ENCODE measurements at regions of chr17 and their contacts with region 1.

Region 1: DNA sequence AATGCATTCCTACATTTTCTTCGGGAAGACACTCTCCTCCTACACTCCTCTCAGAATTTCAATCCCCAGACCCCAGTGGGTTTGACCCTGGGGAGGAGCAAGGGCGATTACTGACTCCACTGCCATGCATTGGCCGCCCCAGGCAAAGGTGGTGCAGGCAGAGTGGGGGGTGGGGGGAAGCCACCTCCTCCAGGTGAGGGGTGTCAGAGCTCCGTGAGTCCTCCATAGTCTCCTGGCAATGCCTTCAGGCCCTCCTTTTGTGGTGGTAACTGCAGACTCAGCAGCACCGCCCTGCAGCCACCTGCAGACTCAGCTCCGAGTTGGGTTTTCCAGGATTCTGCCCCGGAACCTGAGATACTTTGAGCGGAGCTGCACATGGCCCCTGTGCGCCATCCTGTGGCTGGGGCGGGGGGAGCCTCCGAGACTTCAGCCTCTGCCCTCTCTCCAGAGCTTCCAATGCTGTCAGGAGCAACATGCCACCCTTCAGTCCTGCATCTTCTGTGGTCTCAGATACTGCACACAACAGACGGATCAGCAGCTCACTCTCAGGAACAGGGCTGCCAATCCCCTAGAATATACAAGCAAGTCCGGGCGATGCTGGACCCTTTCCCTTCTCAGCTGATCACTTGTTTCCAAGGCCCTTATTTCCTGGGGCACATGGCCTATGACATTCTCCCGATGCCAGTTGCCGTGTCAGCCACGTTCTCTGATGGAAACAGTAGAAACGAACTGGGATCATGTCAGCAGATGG is 2.4 kb upstream of the SLC47A2 start:
- DNase-seq: no peak
- H3K4me3 ChIP-seq: no peak overlapping the region
- H3K27ac ChIP-seq: peak overlapping the region in 1 of 2 donors; percentile 40
- H3K4me1 ChIP-seq: no peaks in the 10 kb centered on the region
- H3K27me3 ChIP-seq: no peaks in the 10 kb centered on the region
- CTCF ChIP-seq: no peak
- POLR2A ChIP-seq: no peak

Region 2: GRCh38 chr17:19590912-19591551 is 127.7 kb before region 1 on chr17:
- intact Hi-C with region 1: no loop called
- DNase-seq: no peak
- H3K4me3 ChIP-seq: no peak overlapping the region
- H3K27ac ChIP-seq: no peak overlapping the region
- H3K4me1 ChIP-seq: no peaks in the 10 kb centered on the region
- H3K27me3 ChIP-seq: no peaks in the 10 kb centered on the region
- CTCF ChIP-seq: no peak
- POLR2A ChIP-seq: no peak

Region 3: GRCh38 chr17:19741832-19742457 is 23.2 kb after region 1 on chr17:
- intact Hi-C with region 1: loop called (anchors 1 kb)
- DNase-seq: no peak
- H3K4me3 ChIP-seq: no peak overlapping the region
- H3K27ac ChIP-seq: no peak overlapping the region
- H3K4me1 ChIP-seq: peaks cover 3 to 5% of the 10 kb centered on the region in 2 donors
- H3K27me3 ChIP-seq: no peaks in the 10 kb centered on the region
- CTCF ChIP-seq: no peak
- POLR2A ChIP-seq: no peak

Measured in breast epithelium (tissue), 4 donors.